Activated CD4-positive, alpha-beta T cell treated with anti-CD3 and anti-CD28 coated beads for 36 hours (primary cell): ENCODE measurements at regions of chr16 and their contacts with region 1.

Region 1: DNA sequence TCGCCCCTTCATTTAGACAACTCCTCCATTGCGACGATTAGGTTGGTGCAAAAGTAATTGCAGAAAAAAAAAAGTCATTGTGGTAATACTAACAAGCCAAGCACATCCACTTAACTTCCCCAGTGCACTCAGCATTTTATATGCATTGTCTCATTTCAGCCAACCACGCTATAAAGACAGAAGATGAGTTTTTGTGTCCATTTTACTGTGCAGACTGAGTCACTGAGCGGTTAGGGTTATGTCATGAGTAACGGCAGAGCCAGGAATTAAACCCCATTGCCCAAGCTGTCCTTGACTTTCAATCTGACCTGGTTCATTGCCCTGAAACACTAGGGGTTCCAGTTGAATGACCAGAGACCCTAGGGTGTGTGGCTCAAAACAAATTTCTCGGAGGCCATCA is 218.7 kb downstream of the XYLT1 start:
- DNase-seq: no peak
- ATAC-seq: peak; percentile 16
- H3K4me3 Mint-ChIP-seq: no peak overlapping the region
- H3K27ac Mint-ChIP-seq: no peak overlapping the region
- H3K4me1 Mint-ChIP-seq: peaks cover 2% of the 10 kb centered on the region
- H3K27me3 Mint-ChIP-seq: no peaks in the 10 kb centered on the region

Region 2: DNA sequence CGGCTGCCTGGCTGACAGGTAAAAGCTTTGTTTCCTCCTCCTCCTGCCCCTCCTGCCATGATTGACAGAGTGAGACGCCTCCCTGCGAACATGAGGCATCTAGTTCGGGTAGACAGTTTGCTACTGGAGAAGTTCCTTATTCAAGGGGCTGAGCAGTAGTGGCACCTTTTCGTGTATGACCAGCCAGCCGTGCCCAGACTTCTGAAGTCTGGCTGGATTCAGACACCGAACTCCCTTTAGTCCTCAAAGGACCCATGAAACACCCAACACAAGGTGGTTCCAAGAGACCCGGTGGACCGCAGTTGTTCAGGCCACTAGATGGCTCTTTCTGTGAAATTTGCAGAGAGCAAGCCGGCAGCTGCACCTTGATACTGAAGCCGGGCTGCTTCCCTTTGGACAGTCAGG is 25.9 kb after region 1 on chr16:
- CTCF ChIA-PET with region 1: no interaction called
- POLR2A ChIA-PET with region 1: no interaction called
- intact Hi-C with region 1: loop called in 1 of 2 experiments (anchors 2 kb)
- DNase-seq: peak; percentile 20
- ATAC-seq: no peak
- H3K4me3 Mint-ChIP-seq: no peak overlapping the region
- H3K27ac Mint-ChIP-seq: no peak overlapping the region
- H3K4me1 Mint-ChIP-seq: peaks cover 31% of the 10 kb centered on the region
- H3K27me3 Mint-ChIP-seq: no peaks in the 10 kb centered on the region

Region 3: GRCh38 chr16:17497648-17498047 is 245.6 kb after region 1 on chr16:
- CTCF ChIA-PET with region 1: no interaction called
- POLR2A ChIA-PET with region 1: no interaction called
- intact Hi-C with region 1: no loop called
- DNase-seq: no peak
- ATAC-seq: no peak
- H3K4me3 Mint-ChIP-seq: no peak overlapping the region
- H3K27ac Mint-ChIP-seq: no peak overlapping the region
- H3K4me1 Mint-ChIP-seq: no peaks in the 10 kb centered on the region
- H3K27me3 Mint-ChIP-seq: no peaks in the 10 kb centered on the region